ENCODE measurements at regions of chr21 and their contacts with region 1.

Region 1: GRCh38 chr21:42496122-42496900 is at the start of gene RSPH1:
- DNase-seq: peak; percentile 99
- ATAC-seq: peak; percentile 99 to 100 (median 100)
- H3K4me3 ChIP-seq: peak within 1 kb of the TSS; percentile 51 to 90 (median 70)
- H3K27ac ChIP-seq: peak within 1 kb of the TSS in 9 of 10 donors; percentile 52 to 85 (median 79)
- H3K4me1 ChIP-seq: peaks cover 0 to 14% (median 8%) of the 10 kb centered on the region in 9 donors
- H3K27me3 ChIP-seq: no peaks in the 10 kb centered on the region
- CTCF ChIP-seq: no peak
- total RNA-seq, gene RSPH1: 0.20 to 0.36 TPM in 2 of 10 donors, not detected in the others

Region 2: DNA sequence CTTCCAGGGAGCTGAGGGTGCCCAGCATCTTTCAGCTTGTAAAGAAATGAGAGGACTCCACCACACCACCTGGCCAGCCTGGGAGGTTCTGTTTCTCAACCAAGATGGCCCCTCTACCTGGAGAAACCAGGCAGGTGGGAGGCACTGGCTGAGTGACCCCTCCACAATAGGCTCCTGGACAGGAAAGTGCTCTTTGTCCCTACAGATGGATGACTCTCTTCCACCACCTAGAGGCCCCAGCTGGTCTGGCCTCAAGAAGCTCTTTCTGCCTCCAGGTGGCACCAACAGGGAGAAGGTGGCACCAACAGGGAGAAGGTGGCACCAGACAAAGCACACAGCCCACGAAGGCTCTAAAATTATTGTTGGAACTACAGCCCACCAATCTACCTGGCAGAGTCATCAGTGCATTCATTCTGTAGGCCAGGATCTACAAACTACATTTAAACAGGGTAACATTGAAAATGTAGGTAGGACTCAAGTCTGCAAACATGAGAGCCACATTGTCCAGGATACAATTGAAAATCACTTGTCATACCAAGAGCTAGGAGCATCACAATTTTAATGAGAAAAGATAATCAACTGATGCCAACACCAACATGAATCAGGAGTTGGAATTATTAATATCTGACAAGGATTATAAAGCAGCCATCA is 114.9 kb before region 1 on chr21:
- intact Hi-C with region 1: no loop called
- DNase-seq: no peak
- ATAC-seq: no peak
- H3K4me3 ChIP-seq: no peak overlapping the region
- H3K27ac ChIP-seq: no peak overlapping the region
- H3K4me1 ChIP-seq: no peaks in the 10 kb centered on the region
- H3K27me3 ChIP-seq: peaks cover 0 to 33% (median 6%) of the 10 kb centered on the region in 7 donors
- CTCF ChIP-seq: peak in 7 of 9 donors; percentile 24 to 64 (median 43)

Region 3: GRCh38 chr21:42527489-42528158 is 31.3 kb after region 1 on chr21:
- intact Hi-C with region 1: loop called in 1 of 10 experiments (anchors 1 kb)
- DNase-seq: no peak
- ATAC-seq: peak in 1 of 8 donors; percentile 37
- H3K4me3 ChIP-seq: peak overlapping the region in 7 of 10 donors; percentile 10 to 31 (median 14)
- H3K27ac ChIP-seq: peak overlapping the region in 9 of 10 donors; percentile 2 to 90 (median 68)
- H3K4me1 ChIP-seq: peaks cover 4 to 58% (median 49%) of the 10 kb centered on the region in 9 donors
- H3K27me3 ChIP-seq: no peaks in the 10 kb centered on the region
- CTCF ChIP-seq: no peak

Region 4: DNA sequence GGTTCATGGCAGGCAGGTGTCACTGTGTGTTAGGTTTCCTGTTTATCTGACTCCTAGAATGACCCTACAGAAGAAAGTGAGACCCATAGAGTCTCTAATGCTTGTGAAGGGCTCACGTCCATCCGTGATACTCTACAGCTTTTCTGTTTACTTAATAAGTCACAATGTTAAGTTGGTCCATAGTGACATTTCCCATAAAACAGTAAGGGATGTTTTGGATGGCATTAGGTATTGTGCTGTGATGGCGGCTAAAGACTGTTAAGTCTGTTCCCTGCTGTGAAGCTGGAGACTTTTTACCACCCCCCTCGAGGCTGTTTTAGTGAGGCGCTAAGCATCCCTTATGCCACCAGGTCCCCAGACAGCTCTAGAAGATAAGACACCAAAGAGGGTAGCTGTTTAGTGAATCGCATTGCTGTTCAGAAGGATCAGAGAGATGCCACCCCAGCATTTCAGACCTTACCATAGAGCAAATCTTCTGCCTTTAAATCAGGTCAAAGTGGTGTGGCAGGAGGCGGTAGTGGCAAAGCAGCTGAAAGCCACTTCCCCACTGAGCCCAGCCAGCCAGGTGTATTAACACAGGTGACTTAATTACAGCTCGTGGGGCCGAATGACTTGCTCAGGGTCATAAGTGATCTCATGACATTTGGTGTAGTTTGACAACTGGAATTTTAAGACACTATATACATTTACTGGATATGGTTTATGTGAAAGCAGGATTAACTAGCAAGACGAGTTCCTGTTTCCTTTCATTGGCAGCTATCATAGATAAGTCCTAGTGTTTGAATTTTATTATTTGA is 42.4 kb after region 1 on chr21:
- intact Hi-C with region 1: no loop called
- DNase-seq: no peak
- ATAC-seq: no peak
- H3K4me3 ChIP-seq: no peak overlapping the region
- H3K27ac ChIP-seq: no peak overlapping the region
- H3K4me1 ChIP-seq: peaks cover 0 to 19% (median 4%) of the 10 kb centered on the region in 9 donors
- H3K27me3 ChIP-seq: no peaks in the 10 kb centered on the region
- CTCF ChIP-seq: no peak

Region 5: GRCh38 chr21:42636538-42636930 is 140.2 kb after region 1 on chr21:
- intact Hi-C with region 1: no loop called
- DNase-seq: no peak
- ATAC-seq: peak in 2 of 8 donors; percentile 34 to 45
- H3K4me3 ChIP-seq: no peak overlapping the region
- H3K27ac ChIP-seq: no peak overlapping the region
- H3K4me1 ChIP-seq: peaks cover 0 to 13% (median 0%) of the 10 kb centered on the region in 9 donors
- H3K27me3 ChIP-seq: peaks cover 0 to 67% (median 41%) of the 10 kb centered on the region in 7 donors
- CTCF ChIP-seq: no peak

Region 6: DNA sequence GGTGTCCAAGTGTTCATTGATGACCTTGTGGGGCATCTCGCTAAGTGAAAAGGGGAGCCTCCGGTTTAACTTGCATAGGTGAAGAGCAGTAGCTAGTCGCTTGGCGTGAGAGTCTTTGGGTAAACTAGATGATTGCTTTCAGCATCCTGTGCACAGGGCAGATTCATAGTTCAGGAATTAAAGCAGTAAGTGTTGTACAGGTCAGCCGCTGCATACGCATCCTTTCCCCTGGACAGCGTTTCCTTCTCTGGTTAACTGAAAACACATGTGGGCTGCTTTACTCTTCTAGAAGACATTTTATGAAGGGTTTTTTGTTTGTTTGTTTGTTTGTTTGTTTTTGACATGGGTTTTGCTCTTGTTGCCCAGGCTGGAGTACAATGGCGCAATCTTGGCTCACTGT is 408.9 kb after region 1 on chr21:
- intact Hi-C with region 1: no loop called
- DNase-seq: no peak
- ATAC-seq: no peak
- H3K4me3 ChIP-seq: no peak overlapping the region
- H3K27ac ChIP-seq: no peak overlapping the region
- H3K4me1 ChIP-seq: peaks cover 0 to 16% (median 5%) of the 10 kb centered on the region in 9 donors
- H3K27me3 ChIP-seq: no peaks in the 10 kb centered on the region
- CTCF ChIP-seq: no peak

Measured in heart right ventricle (tissue), 16 donors.